ENCODE measurements at regions of chr14 and their contacts with region 1.

Region 1: DNA sequence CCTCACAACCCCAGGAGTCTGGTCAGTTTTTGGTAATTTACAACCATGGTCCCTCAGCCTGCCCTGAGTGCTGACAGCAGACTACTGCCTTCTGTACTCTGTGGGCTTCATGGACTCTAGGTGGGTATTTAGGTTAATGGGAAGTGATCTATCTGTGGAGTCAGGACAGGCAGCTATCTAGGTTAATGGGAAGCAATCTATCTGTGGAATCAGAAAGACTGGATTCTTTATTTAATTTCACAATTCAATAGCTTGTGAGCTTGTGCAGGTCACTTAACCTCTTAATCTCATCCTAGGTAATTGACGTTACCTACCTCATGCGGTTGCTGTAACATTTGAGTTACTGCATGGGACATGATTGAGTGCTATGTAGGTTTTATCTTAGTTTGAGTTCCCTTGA is 777.5 kb downstream of the NRXN3 start:
- DNase-seq: no peak
- H3K4me3 ChIP-seq: no peak overlapping the region
- H3K27ac ChIP-seq: no peak overlapping the region
- H3K4me1 ChIP-seq: no peaks in the 10 kb centered on the region
- CTCF ChIP-seq: no peak

Region 2: DNA sequence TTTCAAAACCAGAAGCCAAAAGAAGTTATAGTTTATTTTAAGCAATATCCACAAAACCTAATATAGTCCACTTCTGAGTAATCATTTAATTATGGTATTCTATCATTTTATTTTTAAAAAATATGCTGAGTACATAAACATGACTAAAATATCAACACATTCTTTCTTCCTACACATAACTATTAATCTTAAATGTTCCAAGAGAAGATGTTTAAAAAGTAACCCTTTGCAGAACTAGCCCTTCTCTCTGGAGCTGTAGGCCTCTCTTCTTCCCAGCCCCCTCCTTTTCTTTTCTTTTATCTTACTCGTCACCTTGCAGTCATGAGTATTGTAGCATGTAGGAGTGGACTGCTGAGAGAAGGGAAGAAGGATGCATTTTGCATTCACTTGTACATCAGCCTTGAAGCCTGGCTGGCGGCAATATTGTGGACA is 164.3 kb after region 1 on chr14:
- CTCF ChIA-PET with region 1: no interaction called
- POLR2A ChIA-PET with region 1: interaction called, 12 read pairs
- intact Hi-C with region 1: no loop called
- DNase-seq: no peak
- H3K4me3 ChIP-seq: no peak overlapping the region
- H3K27ac ChIP-seq: no peak overlapping the region
- H3K4me1 ChIP-seq: no peaks in the 10 kb centered on the region
- CTCF ChIP-seq: no peak

Measured in OCI-LY7 (cell line).